Calu3 (cell line): ENCODE measurements at regions of chr1 and their contacts with region 1.

Region 1: GRCh38 chr1:46489638-46490405 is at the start of gene DMBX1:
- DNase-seq: peak; percentile 72
- H3K4me3 Mint-ChIP-seq: peak within 1 kb of the TSS; percentile 71
- H3K27ac Mint-ChIP-seq: peak within 1 kb of the TSS; percentile 42
- H3K4me1 Mint-ChIP-seq: peaks cover 23% of the 10 kb centered on the region
- H3K27me3 Mint-ChIP-seq: peaks cover 59% of the 10 kb centered on the region
- CTCF ChIP-seq: no peak
- total RNA-seq, gene DMBX1: 0.88 and 2.3 TPM in 2 replicates

Region 2: GRCh38 chr1:46455951-46456350 is 33.9 kb before region 1 on chr1:
- CTCF ChIA-PET with region 1: no interaction called
- intact Hi-C with region 1: loop called (anchors 2 kb)
- DNase-seq: no peak
- H3K4me3 Mint-ChIP-seq: no peak overlapping the region
- H3K27ac Mint-ChIP-seq: no peak overlapping the region
- H3K4me1 Mint-ChIP-seq: no peaks in the 10 kb centered on the region
- H3K27me3 Mint-ChIP-seq: peaks cover 86% of the 10 kb centered on the region
- CTCF ChIP-seq: no peak